Heart right ventricle (tissue), 16 donors: ENCODE measurements at regions of chr10 and their contacts with region 1.

Region 1: GRCh38 chr10:59079386-59080226 is 96.8 kb upstream of the PHYHIPL start:
- DNase-seq: no peak
- ATAC-seq: peak in 7 of 8 donors; percentile 47 to 76 (median 62)
- H3K4me3 ChIP-seq: no peak overlapping the region
- H3K27ac ChIP-seq: peak overlapping the region in 6 of 10 donors; percentile 8 to 47 (median 22)
- H3K4me1 ChIP-seq: peaks cover 0 to 22% (median 0%) of the 10 kb centered on the region in 9 donors
- H3K27me3 ChIP-seq: no peaks in the 10 kb centered on the region
- CTCF ChIP-seq: no peak

Region 2: DNA sequence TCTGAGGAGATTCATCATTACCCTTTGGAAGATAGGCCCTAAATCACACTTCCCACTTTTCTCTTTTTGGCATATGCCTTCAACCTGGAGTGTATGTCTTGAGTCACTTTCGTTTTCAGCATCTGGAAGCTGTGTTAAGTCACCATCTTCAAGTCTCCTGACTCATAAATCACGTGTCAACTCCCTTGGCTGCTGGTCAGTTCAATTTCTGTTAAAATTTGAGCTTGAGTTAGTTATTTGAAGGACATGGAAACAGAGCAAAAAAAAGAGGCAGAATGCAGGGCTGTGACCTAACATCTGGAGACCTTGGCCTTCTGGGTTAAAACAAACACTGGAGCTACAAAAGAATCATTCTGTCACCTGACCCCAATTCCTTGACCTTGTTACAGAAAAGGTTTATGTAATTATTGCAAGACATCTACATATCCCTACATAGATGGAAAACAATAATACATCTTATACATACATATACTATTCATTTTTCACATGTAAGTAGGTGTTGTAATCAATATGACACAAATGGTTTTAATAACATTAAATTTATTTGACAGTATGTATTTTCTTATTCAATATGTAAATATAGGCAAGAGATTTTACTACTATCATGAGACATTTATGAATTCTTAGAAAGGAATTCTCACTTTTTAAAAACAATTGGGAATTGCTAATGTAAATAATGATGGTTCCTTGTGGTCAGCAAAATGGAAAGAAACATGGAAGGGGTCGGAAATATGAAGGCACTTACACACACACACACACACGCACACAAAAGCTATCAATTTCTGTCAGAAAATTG is 72.9 kb before region 1 on chr10:
- intact Hi-C with region 1: loop called in 1 of 10 experiments (anchors 10 kb)
- DNase-seq: peak in 1 of 2 donors; percentile 32
- ATAC-seq: peak in 7 of 8 donors; percentile 58 to 82 (median 71)
- H3K4me3 ChIP-seq: no peak overlapping the region
- H3K27ac ChIP-seq: peak overlapping the region in 1 of 10 donors; percentile 12
- H3K4me1 ChIP-seq: peaks cover 0 to 6% (median 0%) of the 10 kb centered on the region in 9 donors
- H3K27me3 ChIP-seq: no peaks in the 10 kb centered on the region
- CTCF ChIP-seq: no peak